GM10248 (cell line): ENCODE measurements at regions of chr2 and their contacts with region 1.

Region 1: DNA sequence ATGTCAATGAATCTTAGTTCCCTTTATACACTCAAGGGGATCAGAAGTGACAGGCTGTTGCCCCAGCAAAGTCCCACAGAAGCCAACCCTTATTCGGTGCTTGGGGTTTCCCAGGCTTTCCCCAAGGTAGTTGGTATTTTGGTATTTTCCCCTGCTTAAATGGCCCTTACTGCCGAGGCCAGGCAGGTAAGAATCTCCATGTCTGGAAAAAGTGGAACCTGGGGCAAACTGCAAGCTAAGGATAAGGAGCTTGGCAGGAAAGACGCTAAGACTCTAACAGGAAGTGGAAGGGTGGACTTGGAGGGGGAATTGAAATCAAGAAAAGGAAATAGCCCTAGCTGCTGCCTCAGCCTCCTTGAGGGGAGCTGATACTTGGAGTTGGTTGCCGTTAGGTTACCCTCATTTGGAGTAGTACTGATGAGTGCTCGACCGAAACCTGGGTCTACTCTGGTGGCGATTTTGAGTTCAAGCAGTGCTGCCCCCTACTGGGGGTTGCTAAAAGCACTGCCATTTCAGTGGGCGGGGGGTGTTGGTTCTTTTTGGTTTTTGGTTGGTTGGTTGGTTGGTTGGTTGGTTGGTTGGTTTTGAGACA is 3.3 kb upstream of the GPBAR1 start:
- DNase-seq: peak; percentile 71
- CTCF ChIP-seq: peak; percentile 63

Region 2: DNA sequence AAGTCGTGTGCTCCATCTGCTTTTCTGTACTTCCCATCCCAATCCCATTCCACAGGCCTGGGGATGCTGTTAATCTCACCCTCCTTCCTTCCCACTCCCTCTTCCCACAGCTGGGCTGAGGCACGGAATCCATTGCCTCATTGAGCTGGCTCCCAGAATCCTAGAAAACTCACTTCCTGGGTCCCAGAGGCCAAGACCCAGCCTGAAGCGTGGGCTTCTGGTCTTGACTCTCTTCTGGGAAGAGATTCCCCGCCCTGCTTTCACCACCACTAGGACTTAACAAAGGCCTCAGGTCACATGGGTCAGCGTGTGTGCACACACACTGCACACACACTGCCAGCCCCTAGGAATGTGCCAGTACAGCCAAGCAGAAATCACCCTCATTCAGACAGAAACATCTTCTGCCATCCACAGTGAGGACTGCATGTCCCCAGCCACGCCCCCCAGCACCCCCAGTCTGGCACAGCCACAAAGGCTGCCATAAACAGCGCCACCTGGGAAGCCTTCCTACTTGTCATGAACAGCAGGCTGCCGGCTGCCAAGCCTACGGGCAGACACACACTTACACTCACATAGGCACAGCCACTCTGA is 420.5 kb before region 1 on chr2:
- CTCF ChIA-PET with region 1: no interaction called
- POLR2A ChIA-PET with region 1: no interaction called
- DNase-seq: no peak
- CTCF ChIP-seq: no peak

Region 3: DNA sequence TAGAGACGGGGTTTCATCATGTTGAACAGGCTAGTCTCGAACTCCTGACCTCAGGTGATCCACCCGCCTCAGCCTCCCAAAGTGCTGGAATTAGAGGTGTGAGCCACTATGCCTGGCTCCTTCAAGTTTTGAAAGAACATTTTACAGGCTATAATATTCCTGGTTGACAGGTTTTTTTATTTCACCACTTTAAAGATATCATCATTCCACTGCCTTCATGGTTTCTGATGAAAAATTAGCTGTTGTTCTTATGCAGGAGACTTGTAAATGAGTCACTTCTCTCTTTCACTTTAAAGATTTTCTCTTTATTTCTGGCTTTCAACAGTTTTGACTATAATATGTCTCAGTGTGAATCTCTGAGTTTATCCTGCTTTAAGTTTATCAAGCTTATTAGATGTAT is 48.4 kb before region 1 on chr2:
- CTCF ChIA-PET with region 1: interaction called, 11 read pairs
- POLR2A ChIA-PET with region 1: no interaction called
- DNase-seq: no peak
- CTCF ChIP-seq: no peak

Region 4: GRCh38 chr2:218229239-218229638 is 28.2 kb before region 1 on chr2:
- CTCF ChIA-PET with region 1: interaction called, 10 read pairs
- POLR2A ChIA-PET with region 1: no interaction called
- DNase-seq: peak; percentile 77
- CTCF ChIP-seq: no peak

Region 5: DNA sequence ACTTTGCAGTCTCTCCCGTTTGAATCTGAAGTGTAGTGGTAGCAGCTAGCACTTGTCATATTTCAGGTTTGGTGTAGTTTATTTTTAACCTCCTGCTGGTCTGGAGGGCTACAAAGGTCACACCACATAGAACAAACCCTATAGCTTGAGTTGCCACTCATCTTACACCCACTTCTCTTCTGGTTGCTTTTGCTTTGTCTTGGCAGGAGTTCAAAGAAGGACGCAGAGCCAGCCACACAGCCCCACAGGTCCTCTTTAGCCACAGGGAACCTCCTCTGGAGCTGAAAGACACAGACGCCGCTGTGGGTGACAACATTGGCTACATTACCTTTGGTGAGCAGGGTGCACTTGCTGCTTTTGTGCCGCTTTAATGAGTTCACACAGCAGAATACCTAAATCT is 12.3 kb before region 1 on chr2:
- CTCF ChIA-PET with region 1: interaction called, 21 read pairs
- POLR2A ChIA-PET with region 1: no interaction called
- DNase-seq: no peak
- CTCF ChIP-seq: no peak

Region 6: DNA sequence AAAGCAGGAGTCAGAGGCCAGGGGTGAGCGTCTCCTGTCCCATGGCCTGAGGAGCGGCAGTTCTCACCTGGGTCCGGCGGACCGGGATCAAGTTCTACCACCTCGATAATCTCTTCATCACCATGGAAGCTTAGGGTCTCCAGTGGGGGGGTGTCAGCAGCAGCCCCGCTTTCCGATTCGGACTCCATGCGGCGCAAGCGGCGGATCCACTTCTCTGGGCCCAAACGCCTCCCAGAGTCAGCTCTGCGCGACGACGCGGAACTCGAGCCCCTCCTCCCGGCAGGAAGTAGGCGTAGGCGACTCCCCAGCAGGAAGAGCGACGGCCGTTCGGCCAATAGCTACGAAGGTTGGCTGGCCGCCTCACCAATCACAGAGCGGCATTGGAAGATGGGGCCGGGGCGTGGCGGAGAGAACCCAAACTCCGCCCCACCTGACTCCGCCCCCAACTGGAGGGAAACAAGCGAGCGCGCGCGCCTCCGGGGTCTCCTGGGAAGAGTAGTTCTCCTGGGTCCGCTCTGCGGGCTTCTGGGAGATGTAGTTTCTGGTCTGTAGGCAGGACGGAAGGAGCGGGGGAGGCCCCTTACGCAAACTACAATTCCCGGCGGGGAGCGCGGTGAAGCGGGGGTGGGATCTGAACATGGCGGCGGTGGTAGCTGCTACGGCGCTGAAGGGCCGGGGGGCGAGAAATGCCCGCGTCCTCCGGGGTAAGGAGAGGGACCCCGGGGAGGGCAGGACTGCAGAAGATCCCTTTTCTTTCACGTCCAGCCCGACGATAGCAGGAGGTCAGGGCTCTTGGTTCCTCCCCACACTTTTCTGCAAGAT is 12.6 kb after region 1 on chr2 and contains the starts of genes AAMP and PNKD:
- CTCF ChIA-PET with region 1: interaction called, 57 read pairs
- POLR2A ChIA-PET with region 1: interaction called, 5 read pairs
- DNase-seq: peak; percentile 99
- CTCF ChIP-seq: no peak

Region 7: DNA sequence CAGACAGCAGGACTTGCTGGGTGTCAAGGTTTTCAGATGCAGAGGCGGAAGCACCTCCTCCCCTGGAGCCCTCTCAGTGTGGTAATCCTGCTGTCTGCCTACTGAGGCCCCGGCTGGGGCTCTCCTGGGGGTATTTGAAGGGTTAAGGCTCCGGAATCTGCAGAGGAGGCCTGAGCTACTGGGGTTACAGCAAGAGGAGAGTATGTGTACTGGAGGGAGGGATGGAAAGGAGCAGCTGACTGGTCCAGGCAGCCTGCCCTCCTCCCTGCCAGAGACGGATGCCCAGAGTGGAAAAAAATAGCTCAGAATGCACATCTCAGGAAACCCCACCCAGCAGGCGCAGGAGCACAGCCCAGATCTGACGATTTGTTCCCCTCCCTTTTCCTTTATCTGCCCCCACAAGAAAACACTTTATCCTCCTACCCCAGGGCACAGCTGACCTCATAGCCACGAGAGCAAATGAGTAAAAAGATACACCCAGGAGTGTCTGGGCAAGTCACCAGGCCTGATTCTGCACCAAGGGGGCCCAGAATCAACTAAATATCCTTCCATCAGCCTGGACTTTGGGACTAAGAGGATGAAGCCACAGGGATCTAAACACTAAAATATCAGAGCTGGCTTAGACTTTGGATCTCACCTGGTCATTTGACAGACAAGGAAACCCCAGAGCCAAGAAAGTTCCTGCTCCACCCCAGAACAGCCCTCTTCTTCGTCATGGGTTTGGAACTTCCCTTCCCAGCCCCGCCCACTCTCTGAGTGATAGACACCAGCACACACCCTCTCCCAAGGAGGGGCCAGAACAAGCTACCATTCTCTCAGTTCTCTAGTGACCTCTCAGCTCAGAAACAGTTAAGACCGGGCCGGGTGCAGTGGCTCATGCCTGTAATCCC is 29.3 kb after region 1 on chr2:
- CTCF ChIA-PET with region 1: interaction called, 18 read pairs
- POLR2A ChIA-PET with region 1: no interaction called
- DNase-seq: peak; percentile 86
- CTCF ChIP-seq: no peak